A549 (cell line): ENCODE measurements at regions of chr9 and their contacts with region 1.

Region 1: GRCh38 chr9:89597711-89598625 is 6.8 kb upstream of the GADD45G start:
- DNase-seq: peak; percentile 24 to 66
- ATAC-seq: peak; percentile 49 to 69; a peak in 4 of 6 replicates
- H3K4me3 ChIP-seq: no peak overlapping the region
- H3K27ac ChIP-seq: no peak overlapping the region
- H3K4me1 ChIP-seq: no peaks in the 10 kb centered on the region
- CTCF ChIP-seq: peak; percentile 91
- EP300 ChIP-seq: no peak
- POLR2A ChIP-seq: no peak
- RAD21 ChIP-seq: peak; percentile 91 to 93

Region 2: GRCh38 chr9:89448381-89448780 is 149.6 kb before region 1 on chr9:
- CTCF ChIA-PET with region 1: no interaction called
- POLR2A ChIA-PET with region 1: no interaction called
- DNase-seq: no peak
- ATAC-seq: no peak
- H3K4me3 ChIP-seq: no peak overlapping the region
- H3K27ac ChIP-seq: no peak overlapping the region
- H3K4me1 ChIP-seq: no peaks in the 10 kb centered on the region
- CTCF ChIP-seq: no peak
- EP300 ChIP-seq: no peak
- POLR2A ChIP-seq: no peak
- RAD21 ChIP-seq: no peak

Region 3: DNA sequence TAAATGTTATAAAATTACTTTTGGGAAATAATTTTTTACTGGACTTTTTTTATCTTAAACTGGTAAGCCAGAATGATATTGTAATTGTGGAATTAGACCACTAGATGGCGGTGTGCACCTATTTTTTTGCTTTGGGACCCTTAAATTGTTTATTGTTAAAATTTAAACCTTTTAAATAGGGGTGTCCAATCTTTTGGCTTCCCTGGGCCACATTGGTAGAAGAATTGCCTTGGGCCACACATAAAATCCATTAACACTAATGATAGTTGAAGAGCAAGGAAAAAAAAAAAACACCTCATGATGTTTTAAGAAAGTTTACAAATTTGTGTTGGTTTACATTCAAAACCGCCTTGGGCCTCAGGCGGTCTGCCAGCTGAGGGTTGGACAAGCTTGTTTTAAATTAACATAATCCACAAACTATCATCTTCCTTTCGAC is 21.5 kb before region 1 on chr9:
- CTCF ChIA-PET with region 1: interaction called, 75 read pairs
- POLR2A ChIA-PET with region 1: no interaction called
- DNase-seq: peak; percentile 38
- ATAC-seq: no peak
- H3K4me3 ChIP-seq: no peak overlapping the region
- H3K27ac ChIP-seq: no peak overlapping the region
- H3K4me1 ChIP-seq: no peaks in the 10 kb centered on the region
- CTCF ChIP-seq: peak; percentile 81
- EP300 ChIP-seq: no peak
- POLR2A ChIP-seq: no peak
- RAD21 ChIP-seq: peak; percentile 67 to 69

Region 4: GRCh38 chr9:90086101-90086511 is 488.1 kb after region 1 on chr9:
- CTCF ChIA-PET with region 1: interaction called, 11 read pairs
- POLR2A ChIA-PET with region 1: no interaction called
- DNase-seq: no peak
- ATAC-seq: no peak
- H3K4me3 ChIP-seq: no peak overlapping the region
- H3K27ac ChIP-seq: no peak overlapping the region
- H3K4me1 ChIP-seq: no peaks in the 10 kb centered on the region
- CTCF ChIP-seq: no peak
- EP300 ChIP-seq: no peak
- POLR2A ChIP-seq: no peak
- RAD21 ChIP-seq: no peak

Region 5: DNA sequence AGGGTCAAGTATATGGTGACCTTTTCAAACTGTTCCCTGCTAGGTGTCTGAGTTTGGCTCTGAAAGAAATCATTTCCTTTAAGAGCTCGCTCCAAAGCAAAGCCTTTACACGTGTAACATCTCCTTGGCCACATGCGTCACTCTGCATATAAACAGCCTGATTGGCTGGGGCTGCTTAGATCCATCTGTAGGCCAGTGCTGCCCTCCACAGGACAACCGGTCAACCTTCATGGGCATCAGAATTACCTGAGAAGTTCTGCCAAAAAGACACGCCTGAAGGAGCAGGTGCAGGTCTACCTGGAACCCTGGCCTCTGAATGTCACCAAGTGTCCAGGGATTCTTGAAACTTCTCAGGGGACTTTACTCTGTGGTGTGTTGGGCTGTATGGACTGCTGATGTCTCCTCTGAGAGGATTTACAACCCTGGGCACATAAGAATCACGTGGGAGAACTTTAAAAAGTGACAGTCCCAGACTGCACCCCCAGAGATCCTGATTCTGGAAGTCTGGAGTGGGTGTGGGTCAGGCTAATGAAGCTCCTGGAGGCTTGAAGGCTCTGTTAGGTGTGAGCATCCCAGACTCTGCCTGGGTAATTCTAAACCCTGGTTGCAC is 504.4 kb after region 1 on chr9:
- CTCF ChIA-PET with region 1: interaction called, 371 read pairs
- POLR2A ChIA-PET with region 1: interaction called, 4 read pairs
- DNase-seq: peak; percentile 88 to 91
- ATAC-seq: peak; percentile 93 to 99
- H3K4me3 ChIP-seq: no peak overlapping the region
- H3K27ac ChIP-seq: no peak overlapping the region
- H3K4me1 ChIP-seq: no peaks in the 10 kb centered on the region
- CTCF ChIP-seq: peak; percentile 84
- EP300 ChIP-seq: no peak
- POLR2A ChIP-seq: no peak
- RAD21 ChIP-seq: peak; percentile 91 to 96

Region 6: DNA sequence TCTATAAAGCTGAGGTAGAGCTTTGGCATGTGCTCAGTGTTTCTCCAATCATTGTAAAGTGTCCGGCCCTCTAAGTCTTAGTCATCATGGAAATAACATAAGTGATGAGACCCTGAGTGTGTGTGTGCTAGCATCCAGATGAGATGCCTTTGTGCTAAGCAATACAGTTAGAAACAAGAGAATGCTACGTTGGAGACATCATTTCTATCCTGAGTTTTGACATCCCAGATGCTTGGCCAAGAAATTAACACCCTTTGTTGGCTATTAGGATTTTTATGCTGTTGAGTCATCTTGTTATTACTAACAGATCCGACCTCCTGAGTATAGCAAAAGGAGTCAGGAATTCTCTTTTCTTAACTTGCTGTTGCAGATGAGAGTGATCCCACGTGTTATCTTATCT is 514.8 kb after region 1 on chr9:
- CTCF ChIA-PET with region 1: interaction called, 371 read pairs
- POLR2A ChIA-PET with region 1: no interaction called
- DNase-seq: no peak
- ATAC-seq: no peak
- H3K4me3 ChIP-seq: no peak overlapping the region
- H3K27ac ChIP-seq: no peak overlapping the region
- H3K4me1 ChIP-seq: no peaks in the 10 kb centered on the region
- CTCF ChIP-seq: no peak
- EP300 ChIP-seq: no peak
- POLR2A ChIP-seq: no peak
- RAD21 ChIP-seq: no peak

Region 7: GRCh38 chr9:90121762-90122161 is 523.8 kb after region 1 on chr9:
- CTCF ChIA-PET with region 1: interaction called, 15 read pairs
- POLR2A ChIA-PET with region 1: no interaction called
- DNase-seq: no peak
- ATAC-seq: no peak
- H3K4me3 ChIP-seq: no peak overlapping the region
- H3K27ac ChIP-seq: no peak overlapping the region
- H3K4me1 ChIP-seq: no peaks in the 10 kb centered on the region
- CTCF ChIP-seq: no peak
- EP300 ChIP-seq: no peak
- POLR2A ChIP-seq: no peak
- RAD21 ChIP-seq: no peak

Region 8: DNA sequence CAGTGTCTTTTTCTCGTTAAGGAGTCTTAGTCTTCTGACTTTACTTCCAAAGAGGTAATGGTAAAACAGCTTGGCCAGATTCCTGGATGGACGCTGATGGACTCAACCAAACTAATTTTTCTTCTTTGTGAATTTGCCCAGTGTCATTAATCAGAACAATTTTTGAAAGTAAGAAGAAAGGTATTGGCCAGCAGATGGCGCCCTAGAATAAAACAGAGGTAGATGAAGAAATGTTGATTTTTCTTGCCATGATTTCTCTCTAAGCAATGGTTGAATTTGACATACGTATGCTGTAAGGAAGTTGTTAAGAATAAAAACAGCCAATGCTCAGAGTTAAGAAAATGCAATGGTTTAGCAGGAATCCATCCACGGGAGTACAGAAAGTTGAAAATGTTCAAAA is 544.6 kb after region 1 on chr9:
- CTCF ChIA-PET with region 1: interaction called, 12 read pairs
- POLR2A ChIA-PET with region 1: no interaction called
- DNase-seq: peak in 1 of 2 experiments; percentile 48
- ATAC-seq: no peak
- H3K4me3 ChIP-seq: no peak overlapping the region
- H3K27ac ChIP-seq: no peak overlapping the region
- H3K4me1 ChIP-seq: no peaks in the 10 kb centered on the region
- CTCF ChIP-seq: peak; percentile 55; the same call in 2 of the 3 replicates
- EP300 ChIP-seq: no peak
- POLR2A ChIP-seq: no peak
- RAD21 ChIP-seq: peak; percentile 54 to 55; a peak in 4 of 5 replicates